Mammary epithelial cell (primary cell): ENCODE measurements at regions of chr2 and their contacts with region 1.

Region 1: DNA sequence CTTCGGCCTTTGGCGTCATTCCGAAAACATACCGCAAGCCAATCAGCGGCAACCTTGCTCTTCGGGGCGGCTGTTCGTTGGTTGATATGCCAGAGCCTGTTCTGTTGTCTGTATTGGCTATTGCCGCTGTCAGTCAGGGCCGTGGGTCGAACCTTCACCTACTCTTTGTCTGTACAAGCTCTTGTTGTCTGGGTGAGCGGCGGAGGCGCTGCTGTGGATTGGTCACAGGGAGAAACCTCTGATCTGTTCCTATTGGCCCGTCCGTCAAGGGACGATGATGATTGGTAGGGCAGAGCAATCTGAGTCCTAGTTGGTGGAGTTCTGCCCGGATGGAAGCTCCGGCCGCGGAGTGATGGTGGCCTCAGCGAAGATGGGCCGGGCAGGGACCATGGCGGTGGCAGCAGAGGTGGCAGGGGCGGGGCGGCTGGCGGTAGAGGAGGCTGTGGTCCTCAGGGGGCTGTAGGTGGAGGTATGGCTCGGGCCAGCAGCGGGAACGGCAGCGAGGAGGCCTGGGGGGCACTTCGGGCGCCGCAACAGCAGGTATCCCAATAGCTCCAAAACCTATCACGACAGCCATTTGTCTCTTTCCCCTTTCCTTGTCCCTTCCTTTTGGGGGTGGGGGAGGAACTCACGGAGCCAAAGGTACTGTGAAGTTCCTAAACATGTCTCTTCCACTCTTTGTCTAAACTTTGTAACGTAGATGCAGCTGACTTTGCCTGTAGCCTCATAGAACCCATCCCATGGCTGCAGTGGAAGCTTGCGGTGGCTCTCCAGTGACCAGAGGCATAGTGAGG is at the start of gene WBP1:
- DNase-seq: peak; percentile 100
- H3K4me3 ChIP-seq: peak within 1 kb of the TSS; percentile 82 to 94 (median 90)
- H3K27ac ChIP-seq: peak within 1 kb of the TSS; percentile 90
- H3K4me1 ChIP-seq: peaks cover 30% of the 10 kb centered on the region
- H3K27me3 ChIP-seq: no peaks in the 10 kb centered on the region
- CTCF ChIP-seq: no peak
- total RNA-seq, gene WBP1: 42.7 to 79.3 TPM

Region 2: GRCh38 chr2:73839652-73840411 is 618.5 kb before region 1 on chr2:
- CTCF ChIA-PET with region 1: no interaction called
- dilution Hi-C with region 1: no loop called
- in situ Hi-C with region 1: no loop called
- intact Hi-C with region 1: no loop called
- DNase-seq: no peak
- H3K4me3 ChIP-seq: no peak overlapping the region
- H3K27ac ChIP-seq: no peak overlapping the region
- H3K4me1 ChIP-seq: peaks cover 15% of the 10 kb centered on the region
- H3K27me3 ChIP-seq: no peaks in the 10 kb centered on the region
- CTCF ChIP-seq: no peak

Region 3: GRCh38 chr2:74334931-74335333 is 123.4 kb before region 1 on chr2:
- CTCF ChIA-PET with region 1: no interaction called
- dilution Hi-C with region 1: no loop called
- in situ Hi-C with region 1: no loop called
- intact Hi-C with region 1: loop called (anchors 5 kb)
- DNase-seq: peak; percentile 49
- H3K4me3 ChIP-seq: no peak overlapping the region
- H3K27ac ChIP-seq: no peak overlapping the region
- H3K4me1 ChIP-seq: no peaks in the 10 kb centered on the region
- H3K27me3 ChIP-seq: no peaks in the 10 kb centered on the region
- CTCF ChIP-seq: peak; percentile 96 to 98

Region 4: DNA sequence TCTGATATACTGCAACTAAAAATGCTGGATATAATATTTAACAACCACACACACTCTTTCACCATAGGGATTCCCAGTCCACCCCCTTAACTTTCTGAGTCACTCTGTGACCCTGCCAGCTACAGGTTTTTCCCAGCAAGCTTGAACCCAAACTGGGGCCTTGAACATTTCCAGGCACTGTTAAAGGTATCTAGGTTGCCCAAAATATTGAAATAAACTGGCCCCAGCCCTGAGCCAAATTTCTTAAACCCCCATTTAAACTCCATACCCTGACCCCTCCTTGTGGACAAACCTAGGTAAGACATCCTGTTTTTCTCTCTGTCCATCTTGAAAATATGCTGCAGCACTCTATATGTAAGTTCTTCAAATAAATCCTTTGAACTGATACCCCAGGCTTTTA is 58.5 kb before region 1 on chr2:
- CTCF ChIA-PET with region 1: interaction called, 6 read pairs
- dilution Hi-C with region 1: loop called (anchors 5 kb)
- in situ Hi-C with region 1: no loop called
- intact Hi-C with region 1: no loop called
- DNase-seq: peak; percentile 27
- H3K4me3 ChIP-seq: no peak overlapping the region
- H3K27ac ChIP-seq: no peak overlapping the region
- H3K4me1 ChIP-seq: no peaks in the 10 kb centered on the region
- H3K27me3 ChIP-seq: no peaks in the 10 kb centered on the region
- CTCF ChIP-seq: peak; percentile 47 to 67

Region 5: DNA sequence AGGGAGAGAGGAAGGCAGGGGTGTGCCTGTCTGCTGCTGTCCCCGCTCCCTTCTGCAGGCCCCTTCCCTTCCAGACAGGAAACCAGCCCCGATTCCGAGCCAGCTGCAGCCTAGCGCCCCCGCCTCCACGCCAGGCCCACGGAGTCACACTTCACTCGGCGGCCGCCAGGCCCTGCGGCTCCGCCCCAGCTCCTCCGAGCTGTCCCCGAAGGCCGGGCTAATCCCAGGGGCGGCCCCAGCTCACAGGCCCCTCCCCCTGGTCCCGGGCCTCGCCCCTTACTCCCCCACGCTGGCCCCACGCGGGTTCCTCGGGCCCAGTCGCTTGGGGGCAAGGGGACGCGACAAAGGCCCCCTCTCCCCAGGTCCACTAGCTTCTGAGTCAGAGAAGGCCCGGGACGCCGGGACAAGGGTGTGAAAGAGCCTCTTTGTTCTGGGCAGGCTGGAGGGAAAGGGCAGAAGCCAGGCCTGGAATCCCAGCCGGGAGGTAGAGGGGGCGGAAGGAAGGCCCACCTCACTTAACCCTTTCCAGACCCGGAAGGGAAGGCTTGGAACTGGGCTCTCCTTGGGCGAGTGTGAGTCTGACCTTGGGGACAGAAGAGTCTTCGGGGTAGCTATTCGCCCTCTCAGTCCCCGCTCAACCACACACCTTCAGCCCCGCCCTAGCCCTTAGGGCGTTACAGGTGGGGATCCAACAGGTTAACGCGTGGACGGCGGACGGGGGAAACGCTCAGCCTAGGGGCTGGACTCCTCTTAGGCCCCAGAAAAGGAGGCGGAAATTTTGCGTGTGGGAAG is 17.8 kb before region 1 on chr2:
- CTCF ChIA-PET with region 1: no interaction called
- dilution Hi-C with region 1: no loop called
- in situ Hi-C with region 1: no loop called
- intact Hi-C with region 1: loop called (anchors 1 kb)
- DNase-seq: peak; percentile 81
- H3K4me3 ChIP-seq: peak overlapping the region; percentile 72 to 82 (median 73)
- H3K27ac ChIP-seq: peak overlapping the region; percentile 83
- H3K4me1 ChIP-seq: peaks cover 43% of the 10 kb centered on the region
- H3K27me3 ChIP-seq: no peaks in the 10 kb centered on the region
- CTCF ChIP-seq: peak; percentile 3 to 29

Region 6: DNA sequence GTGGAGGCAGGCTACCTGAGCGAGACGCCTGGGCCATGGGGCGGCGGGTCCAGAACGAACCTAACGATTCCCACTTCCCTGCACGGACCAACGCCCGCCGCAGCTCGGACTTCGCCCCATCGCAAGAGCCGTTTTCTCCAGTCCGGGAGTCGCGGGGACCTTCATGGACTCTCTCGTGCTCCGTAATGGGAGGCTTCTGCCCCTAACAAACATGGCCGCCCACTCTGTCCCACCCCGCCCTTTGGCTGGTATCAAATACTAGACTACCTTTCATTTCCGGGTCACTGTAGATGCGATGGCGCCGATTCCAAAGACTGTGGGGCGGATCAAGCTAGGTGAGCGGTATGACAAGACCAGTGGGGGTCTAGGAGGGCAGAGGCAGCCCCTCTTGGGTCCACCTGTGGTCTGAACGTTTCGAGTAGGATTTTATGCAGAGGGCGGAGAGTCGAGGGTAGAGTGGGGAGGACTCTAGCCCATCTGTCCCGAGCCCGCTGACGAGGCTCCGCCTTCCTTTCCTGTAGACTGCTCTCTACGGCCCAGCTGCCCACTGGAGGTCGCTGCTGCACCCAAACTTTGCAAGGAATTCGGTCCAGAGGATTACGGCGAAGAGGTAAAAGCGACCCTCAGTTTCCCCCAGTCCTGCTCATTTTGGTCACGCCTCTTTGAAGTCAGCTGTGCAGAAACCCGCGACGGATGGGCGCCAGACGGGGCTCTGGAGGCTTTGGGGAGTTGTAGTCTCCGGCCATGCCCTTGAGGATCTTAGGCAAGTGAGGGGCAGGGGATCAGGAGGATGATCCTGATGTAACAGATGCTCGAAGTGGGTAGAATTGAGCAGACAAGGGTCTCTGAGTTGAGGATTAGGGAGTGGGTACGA is 24.7 kb after region 1 on chr2 and contains the starts of genes CCDC142 and TTC31:
- CTCF ChIA-PET with region 1: no interaction called
- dilution Hi-C with region 1: no loop called
- in situ Hi-C with region 1: no loop called
- intact Hi-C with region 1: loop called (anchors 1 kb)
- DNase-seq: peak; percentile 94
- H3K4me3 ChIP-seq: peak within 1 kb of the TSS; percentile 59 to 75 (median 75)
- H3K27ac ChIP-seq: peak within 1 kb of the TSS; percentile 71
- H3K4me1 ChIP-seq: peaks cover 27% of the 10 kb centered on the region
- H3K27me3 ChIP-seq: no peaks in the 10 kb centered on the region
- CTCF ChIP-seq: peak; percentile 91 to 94
- total RNA-seq, gene CCDC142: 13.0 to 18.2 TPM
- total RNA-seq, gene TTC31: 11.5 to 22.0 TPM

Region 7: DNA sequence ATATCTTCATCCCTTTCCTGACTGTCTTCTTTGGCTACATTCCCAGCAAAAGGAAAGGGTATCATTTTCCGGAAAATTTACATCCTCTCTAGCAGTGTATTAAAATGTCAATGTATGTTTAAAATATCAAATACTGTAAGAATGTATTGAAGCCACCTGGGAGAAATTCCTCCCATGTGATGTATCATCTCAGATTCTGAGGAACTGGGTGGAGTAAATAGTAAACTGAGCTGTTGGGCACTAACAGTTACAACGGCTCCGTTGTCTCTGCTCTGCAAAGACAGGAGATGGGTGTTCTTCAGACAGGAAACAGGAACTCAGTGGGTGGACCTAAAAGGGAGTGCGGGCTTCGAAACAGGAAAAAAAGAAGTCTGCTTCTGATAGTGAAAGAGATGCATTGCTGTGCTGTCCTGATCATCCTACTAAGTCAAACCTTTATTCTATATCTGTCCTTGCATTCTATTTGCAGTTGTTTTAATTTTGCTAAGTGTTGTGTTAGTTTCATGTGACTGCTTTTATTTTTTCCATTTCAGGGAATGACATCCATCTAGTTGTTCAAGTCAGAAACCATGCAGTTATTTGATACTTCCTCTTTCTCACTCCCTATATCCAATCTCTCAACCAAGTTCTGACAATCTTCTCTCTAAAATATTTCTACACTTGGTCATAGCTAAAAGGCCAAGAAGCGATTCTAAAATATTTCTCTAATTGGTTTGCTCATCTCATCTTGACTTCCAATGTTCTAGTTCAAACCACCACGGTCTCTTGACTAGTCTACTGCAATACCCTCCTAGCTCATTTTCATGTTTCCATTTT is 115.6 kb after region 1 on chr2:
- CTCF ChIA-PET with region 1: no interaction called
- dilution Hi-C with region 1: no loop called
- in situ Hi-C with region 1: no loop called
- intact Hi-C with region 1: no loop called
- DNase-seq: no peak
- H3K4me3 ChIP-seq: no peak overlapping the region
- H3K27ac ChIP-seq: no peak overlapping the region
- H3K4me1 ChIP-seq: peaks cover 27% of the 10 kb centered on the region
- H3K27me3 ChIP-seq: no peaks in the 10 kb centered on the region
- CTCF ChIP-seq: no peak